ENCODE measurements at regions of chr12 and their contacts with region 1.

Region 1: DNA sequence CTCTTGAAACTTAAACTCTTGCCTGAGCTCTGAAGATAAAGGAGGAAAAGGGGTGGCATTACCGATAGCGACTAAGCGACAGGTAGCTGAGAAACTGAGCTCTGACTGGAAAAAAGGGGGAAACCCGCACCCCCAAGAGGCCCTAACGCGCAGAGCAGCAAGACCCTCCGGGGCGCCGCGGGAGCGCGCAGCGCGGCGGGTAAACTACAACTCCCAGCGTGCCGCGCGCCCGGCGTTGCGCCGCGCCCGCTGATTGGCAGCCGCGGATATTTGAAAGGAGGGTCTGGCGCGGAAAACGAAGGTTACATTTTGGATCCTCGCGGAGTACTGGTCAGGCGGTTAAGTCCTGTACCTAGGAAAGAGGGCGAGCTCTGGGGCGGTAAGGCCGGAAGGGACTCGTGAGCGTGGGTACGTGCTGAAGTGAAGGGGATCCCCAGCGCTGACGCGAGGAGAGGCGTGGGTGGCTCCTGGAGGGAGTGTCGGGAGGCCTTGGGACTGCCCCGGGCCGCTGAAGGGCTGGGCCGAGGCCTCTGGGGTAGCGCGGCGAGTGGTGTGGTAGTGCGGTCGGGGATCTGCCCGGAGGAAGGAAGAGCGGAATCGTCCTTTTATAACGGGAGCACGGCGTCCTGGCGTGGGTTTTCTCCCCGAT is at the start of gene ESPL1:
- DNase-seq: no peak
- H3K4me3 ChIP-seq: peak within 1 kb of the TSS; percentile 95
- CTCF ChIP-seq: peak; percentile 17

Region 2: GRCh38 chr12:52691076-52691840 is 576.9 kb before region 1 on chr12:
- CTCF ChIA-PET with region 1: no interaction called
- POLR2A ChIA-PET with region 1: no interaction called
- DNase-seq: no peak
- H3K4me3 ChIP-seq: peak overlapping the region; percentile 12; the same call in 1 of the 2 replicates
- CTCF ChIP-seq: no peak

Region 3: DNA sequence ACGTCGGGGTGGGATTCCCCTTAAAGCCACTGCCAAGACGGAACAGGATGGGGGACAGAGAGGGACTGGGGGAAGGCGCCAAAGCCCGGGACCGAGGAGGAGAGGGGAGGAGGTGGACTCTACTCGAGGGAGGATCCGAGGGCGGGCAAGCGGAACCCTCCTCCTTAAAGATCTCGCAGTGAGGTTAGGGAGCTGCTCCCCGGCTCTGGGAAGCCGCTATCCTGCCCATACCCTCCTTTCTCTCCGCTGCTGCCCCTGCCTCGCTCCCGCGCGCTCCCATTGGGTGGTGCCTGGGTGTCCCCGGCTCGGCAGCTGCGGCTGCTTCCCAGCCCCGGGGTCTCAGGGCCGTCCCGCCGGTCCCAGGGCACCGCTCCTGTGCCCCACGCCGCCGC is 302.8 kb before region 1 on chr12:
- CTCF ChIA-PET with region 1: no interaction called
- POLR2A ChIA-PET with region 1: no interaction called
- DNase-seq: no peak
- H3K4me3 ChIP-seq: peak overlapping the region; percentile 44
- CTCF ChIP-seq: no peak

Region 4: GRCh38 chr12:53005986-53006809 is 261.9 kb before region 1 on chr12 and contains the start of gene EIF4B:
- CTCF ChIA-PET with region 1: no interaction called
- POLR2A ChIA-PET with region 1: no interaction called
- DNase-seq: peak; percentile 96
- H3K4me3 ChIP-seq: peak within 1 kb of the TSS; percentile 98
- CTCF ChIP-seq: no peak

Region 5: DNA sequence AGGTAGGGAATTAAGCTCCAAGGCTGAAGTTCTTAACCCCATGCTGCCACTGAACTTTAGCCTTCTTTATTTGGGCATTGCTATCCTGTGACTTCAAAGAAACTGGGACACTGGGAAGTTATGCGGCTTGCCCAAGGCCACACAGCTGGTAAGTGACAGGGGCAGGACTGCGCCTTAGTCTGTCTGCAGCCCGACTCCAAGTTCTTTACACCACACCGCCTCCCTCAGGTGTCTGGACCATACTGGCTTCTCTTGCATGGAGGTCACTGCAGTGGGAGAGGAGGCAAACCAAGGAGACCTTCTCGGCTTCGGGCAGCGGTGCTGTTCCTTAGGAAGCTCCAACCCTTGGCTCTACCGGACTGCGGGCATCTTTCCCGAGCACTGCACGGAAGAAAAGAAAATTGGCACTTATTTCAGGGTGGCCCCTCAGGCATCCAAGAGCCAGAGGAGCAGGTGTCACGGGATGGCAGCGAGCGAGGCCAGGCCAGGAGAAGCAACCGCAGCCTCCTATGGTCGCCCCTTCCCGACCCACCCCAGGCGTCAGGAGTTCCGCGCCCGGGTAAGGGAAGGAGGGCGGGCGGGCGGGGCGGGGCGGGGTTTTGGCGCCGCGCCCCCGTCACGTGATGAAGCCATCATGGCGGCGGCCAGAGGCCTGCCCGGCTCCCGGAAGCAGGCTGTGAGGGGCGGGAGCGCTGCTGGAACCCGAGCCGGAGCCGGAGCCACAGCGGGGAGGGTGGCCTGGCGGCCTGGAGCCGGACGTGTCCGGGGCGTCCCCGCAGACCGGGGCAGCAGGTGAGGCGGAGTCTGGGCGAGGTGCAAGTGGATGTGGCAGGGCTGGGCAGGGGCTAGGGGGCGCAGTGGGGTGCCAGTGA is 16.4 kb before region 1 on chr12:
- CTCF ChIA-PET with region 1: interaction called, 10 read pairs
- POLR2A ChIA-PET with region 1: interaction called, 4 read pairs
- DNase-seq: no peak
- H3K4me3 ChIP-seq: peak overlapping the region; percentile 88
- CTCF ChIP-seq: peak; percentile 46

Region 6: GRCh38 chr12:53287741-53288216 is 19.7 kb after region 1 on chr12:
- CTCF ChIA-PET with region 1: interaction called, 62 read pairs
- POLR2A ChIA-PET with region 1: no interaction called
- DNase-seq: no peak
- H3K4me3 ChIP-seq: no peak overlapping the region
- CTCF ChIP-seq: peak; percentile 71

Region 7: DNA sequence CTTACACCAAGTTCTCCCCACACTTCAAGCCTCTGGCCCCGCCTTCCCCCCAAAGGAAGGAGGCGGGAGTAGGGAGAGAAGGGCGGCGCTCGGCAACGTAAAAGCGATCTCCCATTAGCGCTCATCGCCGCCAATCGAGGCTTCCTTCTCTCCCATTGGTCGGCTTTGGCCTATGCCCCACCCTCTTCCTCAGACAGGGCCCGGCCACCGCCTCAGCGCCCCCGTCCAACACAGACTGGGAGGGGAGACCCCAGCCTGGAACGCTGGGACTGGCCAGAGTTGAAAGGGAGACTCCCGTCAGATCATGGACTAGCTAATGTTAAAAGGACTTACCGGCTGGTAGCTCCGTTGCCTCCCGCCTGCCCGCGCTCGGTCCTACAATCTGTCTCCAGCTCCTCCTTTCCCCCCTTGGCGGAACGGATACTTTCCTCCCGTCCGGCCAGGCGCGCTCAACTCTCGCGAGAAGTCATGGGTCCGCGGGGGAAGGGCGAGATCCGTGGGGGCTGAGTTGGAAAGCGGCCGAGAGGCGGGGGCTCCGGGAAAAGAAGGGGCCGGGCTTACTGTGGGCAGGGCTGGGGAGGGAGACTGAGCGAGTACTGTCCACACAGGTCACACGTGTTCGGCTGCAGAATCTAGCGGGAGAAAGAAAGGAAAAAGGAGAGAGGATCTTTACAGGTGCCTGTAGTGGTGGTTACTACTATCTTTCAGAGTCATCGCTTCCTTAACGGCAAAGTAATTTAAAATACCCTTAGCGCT is 358.0 kb after region 1 on chr12 and contains the start of gene ATF7:
- CTCF ChIA-PET with region 1: no interaction called
- POLR2A ChIA-PET with region 1: no interaction called
- DNase-seq: peak; percentile 80
- H3K4me3 ChIP-seq: peak within 1 kb of the TSS; percentile 86
- CTCF ChIP-seq: peak; percentile 1

Measured in AG04449 (cell line).